ENCODE measurements at regions of chr18 and their contacts with region 1.

Region 1: DNA sequence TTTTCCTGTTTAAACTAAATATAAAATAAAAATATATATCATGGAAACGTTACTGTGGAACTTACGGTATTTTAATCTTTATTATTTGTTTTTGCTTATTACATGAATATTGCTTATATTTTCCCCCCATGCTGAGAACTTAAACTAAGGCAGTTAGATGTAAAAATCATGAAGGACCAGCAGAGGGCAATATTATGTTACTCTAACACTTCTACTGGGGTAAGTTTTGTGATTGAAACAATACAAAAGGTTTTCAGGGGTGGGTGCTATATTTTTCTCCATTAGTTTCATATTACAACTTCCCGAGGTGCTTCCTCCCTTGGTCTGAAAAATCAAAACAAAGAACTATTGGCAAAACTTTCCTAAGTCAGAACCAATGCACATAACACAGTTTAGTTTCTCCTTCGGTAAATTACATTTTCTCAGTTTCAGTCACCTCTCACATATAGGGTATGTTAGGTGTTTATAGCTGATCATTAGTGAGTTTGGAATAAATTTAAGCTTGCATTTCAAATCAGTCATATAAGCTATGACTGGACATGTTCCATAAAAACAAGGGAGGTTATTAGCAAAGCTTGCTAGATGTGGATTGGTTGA is 54.8 kb downstream of the ZNF407 start:
- DNase-seq: peak in 4 of 5 donors; percentile 27 to 34 (median 32)
- H3K4me3 ChIP-seq: no peak overlapping the region
- H3K4me3 Mint-ChIP-seq: no peak overlapping the region
- H3K27ac ChIP-seq: no peak overlapping the region
- H3K27ac Mint-ChIP-seq: no peak overlapping the region
- H3K4me1 ChIP-seq: no peaks in the 10 kb centered on the region
- H3K4me1 Mint-ChIP-seq: peaks cover 0 to 2% (median under 1%) of the 10 kb centered on the region in 4 donors
- H3K27me3 ChIP-seq: no peaks in the 10 kb centered on the region
- H3K27me3 Mint-ChIP-seq: no peaks in the 10 kb centered on the region

Region 2: DNA sequence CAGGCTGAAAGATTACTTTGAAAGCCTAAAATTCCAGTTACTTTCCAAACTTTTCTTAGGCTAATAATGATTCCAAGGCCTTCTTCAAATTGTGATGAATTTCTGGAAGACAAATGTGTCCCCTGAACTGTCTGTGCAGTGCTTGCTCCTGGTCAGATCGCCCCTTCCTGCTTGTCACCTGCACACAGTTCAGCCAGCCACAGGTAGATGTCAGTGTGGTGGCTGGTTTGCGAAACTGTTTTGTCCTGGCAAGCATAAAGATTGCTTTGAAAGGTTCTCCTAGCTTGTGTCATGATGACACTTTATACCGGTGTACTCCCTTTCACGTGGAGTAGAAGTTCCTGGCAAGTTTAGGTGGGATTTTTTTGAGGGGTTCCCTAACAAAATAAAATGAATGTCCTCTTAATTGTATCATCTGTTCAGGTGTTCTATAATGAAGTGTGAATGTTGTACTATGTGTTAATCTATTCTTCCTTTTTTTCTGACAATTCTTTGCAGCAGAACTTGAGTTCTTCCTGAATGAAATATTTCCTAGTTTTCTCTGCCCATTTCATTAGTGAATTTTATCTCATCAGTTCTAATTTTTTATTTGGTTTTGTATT is 244.0 kb after region 1 on chr18:
- CTCF ChIA-PET with region 1: no interaction called
- POLR2A ChIA-PET with region 1: no interaction called
- intact Hi-C with region 1: loop called (anchors 10 kb)
- DNase-seq: peak; percentile 36 to 46 (median 43)
- H3K4me3 ChIP-seq: no peak overlapping the region
- H3K4me3 Mint-ChIP-seq: no peak overlapping the region
- H3K27ac ChIP-seq: no peak overlapping the region
- H3K27ac Mint-ChIP-seq: peak overlapping the region in 4 of 7 donors; percentile 0 to 47 (median 24)
- H3K4me1 ChIP-seq: no peaks in the 10 kb centered on the region
- H3K4me1 Mint-ChIP-seq: peaks cover 4 to 13% (median 7%) of the 10 kb centered on the region in 4 donors
- H3K27me3 ChIP-seq: no peaks in the 10 kb centered on the region
- H3K27me3 Mint-ChIP-seq: no peaks in the 10 kb centered on the region

Region 3: DNA sequence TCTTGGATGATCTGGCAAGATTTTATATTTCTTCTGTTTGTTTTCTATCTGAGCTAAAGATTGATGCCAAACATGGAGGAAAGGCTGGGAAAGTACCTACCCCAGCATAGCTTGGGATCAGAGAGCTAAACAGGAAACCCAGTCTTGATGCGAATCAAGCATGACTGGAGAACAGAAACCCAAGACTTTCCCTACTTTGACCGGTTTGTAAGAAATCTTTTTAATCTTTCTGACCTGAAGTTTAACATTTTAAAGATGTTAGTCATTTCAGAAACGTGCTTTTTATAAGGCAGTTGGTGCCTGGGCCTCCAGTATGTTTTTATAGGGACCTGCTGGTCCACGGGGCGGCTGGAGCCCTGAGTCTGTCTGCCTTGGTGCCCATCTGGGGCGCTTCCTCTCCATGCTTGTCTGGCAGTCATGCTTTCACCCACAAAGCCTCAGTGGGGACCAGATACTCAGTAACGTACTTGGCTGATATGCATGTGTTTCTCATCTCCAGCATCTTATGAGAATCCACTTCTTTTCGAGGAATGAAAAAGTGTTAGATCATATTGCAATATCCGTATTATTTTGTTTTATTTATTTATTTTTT is 289.9 kb after region 1 on chr18:
- CTCF ChIA-PET with region 1: no interaction called
- POLR2A ChIA-PET with region 1: no interaction called
- intact Hi-C with region 1: no loop called
- DNase-seq: peak; percentile 18 to 56 (median 23)
- H3K4me3 ChIP-seq: no peak overlapping the region
- H3K4me3 Mint-ChIP-seq: peak overlapping the region; percentile 38 to 85 (median 78)
- H3K27ac ChIP-seq: peak overlapping the region; percentile 20
- H3K27ac Mint-ChIP-seq: peak overlapping the region; percentile 29 to 91 (median 81)
- H3K4me1 ChIP-seq: peaks cover 16% of the 10 kb centered on the region
- H3K4me1 Mint-ChIP-seq: peaks cover 13 to 34% (median 18%) of the 10 kb centered on the region in 4 donors
- H3K27me3 ChIP-seq: no peaks in the 10 kb centered on the region
- H3K27me3 Mint-ChIP-seq: no peaks in the 10 kb centered on the region

Region 4: GRCh38 chr18:75083761-75084160 is 431.3 kb after region 1 on chr18:
- CTCF ChIA-PET with region 1: interaction called, 5 read pairs
- POLR2A ChIA-PET with region 1: no interaction called
- intact Hi-C with region 1: loop called (anchors 1 kb)
- DNase-seq: no peak
- H3K4me3 ChIP-seq: no peak overlapping the region
- H3K4me3 Mint-ChIP-seq: no peak overlapping the region
- H3K27ac ChIP-seq: no peak overlapping the region
- H3K27ac Mint-ChIP-seq: no peak overlapping the region
- H3K4me1 ChIP-seq: no peaks in the 10 kb centered on the region
- H3K4me1 Mint-ChIP-seq: no peaks in the 10 kb centered on the region
- H3K27me3 ChIP-seq: no peaks in the 10 kb centered on the region
- H3K27me3 Mint-ChIP-seq: peaks cover 2 to 3% of the 10 kb centered on the region in 2 donors

Region 5: DNA sequence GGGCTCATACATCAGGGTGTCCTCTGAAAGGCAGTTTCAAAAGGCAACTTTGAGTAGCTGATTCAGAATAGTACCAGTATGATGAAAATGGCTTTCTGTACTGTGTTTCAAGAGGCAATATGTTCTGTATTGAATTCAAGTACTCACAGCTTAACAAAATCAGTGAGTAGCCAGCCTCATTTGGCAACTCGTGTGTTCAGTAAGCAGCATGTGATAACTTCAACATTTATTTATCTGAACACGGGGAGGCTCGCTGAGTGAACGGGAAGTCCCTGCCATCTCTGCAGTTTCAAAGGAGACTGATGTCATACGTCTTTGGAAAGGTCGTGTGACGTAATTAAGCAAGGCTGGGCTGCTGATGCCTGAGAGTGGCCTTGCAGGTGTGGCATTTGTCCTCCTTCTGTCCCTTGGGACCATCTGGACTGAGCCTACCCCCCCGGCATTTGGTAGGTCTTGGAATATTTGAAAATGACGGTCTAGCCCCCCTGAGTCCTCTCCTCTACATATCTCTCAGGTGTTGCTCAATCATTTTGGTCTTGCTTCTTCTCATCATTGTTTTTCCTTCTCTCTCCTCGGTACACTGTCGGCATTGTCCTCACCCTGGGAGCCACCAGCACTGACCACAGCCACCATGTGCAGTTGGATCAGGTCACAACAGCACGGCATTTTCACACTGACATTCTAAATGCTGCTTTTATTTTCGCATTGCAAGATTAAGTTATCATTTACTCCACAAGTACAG is 712.2 kb after region 1 on chr18:
- CTCF ChIA-PET with region 1: interaction called, 3 read pairs
- POLR2A ChIA-PET with region 1: no interaction called
- intact Hi-C with region 1: loop called (anchors 2 kb)
- DNase-seq: no peak
- H3K4me3 ChIP-seq: no peak overlapping the region
- H3K4me3 Mint-ChIP-seq: no peak overlapping the region
- H3K27ac ChIP-seq: no peak overlapping the region
- H3K27ac Mint-ChIP-seq: no peak overlapping the region
- H3K4me1 ChIP-seq: no peaks in the 10 kb centered on the region
- H3K4me1 Mint-ChIP-seq: peaks cover 0 to 1% (median under 1%) of the 10 kb centered on the region in 4 donors
- H3K27me3 ChIP-seq: no peaks in the 10 kb centered on the region
- H3K27me3 Mint-ChIP-seq: peaks cover under 1 to 1% of the 10 kb centered on the region in 2 donors

Region 6: GRCh38 chr18:75727456-75727855 is 1075.0 kb after region 1 on chr18:
- CTCF ChIA-PET with region 1: no interaction called
- POLR2A ChIA-PET with region 1: no interaction called
- intact Hi-C with region 1: loop called (anchors 5 kb)
- DNase-seq: peak in 2 of 5 donors; percentile 5 to 6
- H3K4me3 ChIP-seq: no peak overlapping the region
- H3K4me3 Mint-ChIP-seq: no peak overlapping the region
- H3K27ac ChIP-seq: no peak overlapping the region
- H3K27ac Mint-ChIP-seq: no peak overlapping the region
- H3K4me1 ChIP-seq: no peaks in the 10 kb centered on the region
- H3K4me1 Mint-ChIP-seq: no peaks in the 10 kb centered on the region
- H3K27me3 ChIP-seq: no peaks in the 10 kb centered on the region
- H3K27me3 Mint-ChIP-seq: peaks cover 12 to 13% of the 10 kb centered on the region in 2 donors

Measured in CD4-positive, alpha-beta memory T cell (primary cell).